ENCODE measurements at regions of chr1 and their contacts with region 1.

Region 1: DNA sequence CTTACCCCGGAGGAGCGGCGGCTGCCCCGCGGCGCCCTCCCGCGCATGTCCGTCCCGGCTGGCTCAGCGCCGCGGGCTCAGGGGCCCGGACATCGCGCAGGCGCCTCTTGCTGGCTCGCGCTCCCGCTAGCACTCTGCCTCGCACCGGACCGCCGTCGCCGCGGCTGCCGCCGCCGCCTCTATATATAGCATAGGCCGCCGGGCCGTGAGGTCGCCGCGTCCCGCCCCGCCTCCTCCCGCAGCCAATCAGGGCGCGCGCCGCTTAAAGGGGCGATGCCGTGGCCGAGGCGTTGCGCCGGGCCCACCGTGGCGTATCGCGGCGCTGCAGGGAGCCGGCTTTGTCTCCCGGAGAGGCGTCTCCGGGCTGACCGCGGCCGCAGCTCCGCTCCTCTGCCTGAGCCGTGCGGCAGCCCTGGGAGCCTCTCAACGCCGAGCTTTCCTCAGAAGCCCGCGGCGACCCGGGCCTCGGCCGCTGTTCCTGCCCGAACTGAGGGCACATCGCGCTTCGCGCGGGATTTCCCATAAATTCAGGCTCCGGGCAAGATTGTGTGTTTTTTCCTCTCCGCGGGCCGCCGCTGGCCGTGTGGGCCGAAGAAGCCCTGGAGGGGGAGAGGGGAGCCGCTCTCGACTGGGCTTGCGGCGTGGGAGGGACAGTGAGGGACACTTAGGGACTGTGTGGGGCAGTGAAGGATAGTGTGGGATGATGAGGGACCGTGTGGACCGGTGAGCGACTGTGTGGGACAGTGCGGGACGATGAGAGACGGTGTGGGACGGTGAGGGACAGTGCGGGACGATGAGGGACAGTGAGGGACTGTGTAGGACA is at the start of gene ERRFI1:
- DNase-seq: peak; percentile 67 to 94 (median 84)
- ATAC-seq: peak; percentile 88
- H3K4me3 ChIP-seq: peak within 1 kb of the TSS; percentile 48
- H3K4me3 Mint-ChIP-seq: peak within 1 kb of the TSS; percentile 92
- H3K27ac ChIP-seq: no peak within 1 kb of the TSS
- H3K27ac Mint-ChIP-seq: peak within 1 kb of the TSS; percentile 48
- H3K4me1 ChIP-seq: peaks cover 13% of the 10 kb centered on the region
- H3K4me1 Mint-ChIP-seq: peaks cover 13% of the 10 kb centered on the region
- H3K27me3 ChIP-seq: peaks cover 3 to 14% of the 10 kb centered on the region in 2 experiments
- H3K27me3 Mint-ChIP-seq: peaks cover 30% of the 10 kb centered on the region
- CTCF ChIP-seq: no peak
- total RNA-seq, gene ERRFI1: 3.6 TPM

Region 2: GRCh38 chr1:7961216-7962015 is 64.9 kb before region 1 on chr1 and contains the start of gene PARK7:
- CTCF ChIA-PET with region 1: no interaction called
- POLR2A ChIA-PET with region 1: no interaction called
- intact Hi-C with region 1: loop called in 1 of 2 experiments (anchors 2 kb)
- DNase-seq: peak; percentile 99 to 100 (median 100)
- ATAC-seq: peak; percentile 95
- H3K4me3 ChIP-seq: peak within 1 kb of the TSS; percentile 84
- H3K4me3 Mint-ChIP-seq: peak within 1 kb of the TSS; percentile 99
- H3K27ac ChIP-seq: peak within 1 kb of the TSS; percentile 88 to 94
- H3K27ac Mint-ChIP-seq: peak within 1 kb of the TSS; percentile 98
- H3K4me1 ChIP-seq: peaks cover 56% of the 10 kb centered on the region
- H3K4me1 Mint-ChIP-seq: peaks cover 78% of the 10 kb centered on the region
- H3K27me3 ChIP-seq: no peaks in the 10 kb centered on the region
- H3K27me3 Mint-ChIP-seq: no peaks in the 10 kb centered on the region
- CTCF ChIP-seq: peak; percentile 57
- total RNA-seq, gene PARK7: 57.7 to 62.4 TPM

Region 3: DNA sequence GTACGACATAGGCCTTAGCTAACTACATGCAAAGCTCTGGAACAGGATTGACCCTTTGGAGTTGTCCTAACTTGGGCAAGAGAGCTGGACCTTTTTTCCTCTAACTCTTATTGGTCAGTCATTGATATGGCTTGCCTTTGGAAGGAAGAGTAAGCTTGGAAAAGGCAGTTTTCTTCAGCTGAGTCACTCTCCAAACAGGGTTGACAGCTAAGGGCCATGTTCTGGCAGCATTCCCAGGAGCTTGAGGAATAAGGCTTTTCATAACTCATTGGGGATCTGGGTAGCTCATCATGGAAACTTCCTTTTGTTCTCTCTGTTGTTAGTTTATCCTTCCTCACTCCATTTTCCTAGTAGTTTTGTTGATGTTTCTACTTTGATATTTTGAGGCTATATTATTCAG is 14.2 kb after region 1 on chr1:
- CTCF ChIA-PET with region 1: no interaction called
- POLR2A ChIA-PET with region 1: no interaction called
- intact Hi-C with region 1: no loop called
- DNase-seq: no peak
- ATAC-seq: no peak
- H3K4me3 ChIP-seq: no peak overlapping the region
- H3K4me3 Mint-ChIP-seq: no peak overlapping the region
- H3K27ac ChIP-seq: no peak overlapping the region
- H3K27ac Mint-ChIP-seq: no peak overlapping the region
- H3K4me1 ChIP-seq: no peaks in the 10 kb centered on the region
- H3K4me1 Mint-ChIP-seq: no peaks in the 10 kb centered on the region
- H3K27me3 ChIP-seq: peaks cover 0 to 2% of the 10 kb centered on the region in 2 experiments
- H3K27me3 Mint-ChIP-seq: no peaks in the 10 kb centered on the region
- CTCF ChIP-seq: no peak

Region 4: GRCh38 chr1:8217011-8217711 is 190.8 kb after region 1 on chr1:
- CTCF ChIA-PET with region 1: no interaction called
- POLR2A ChIA-PET with region 1: no interaction called
- intact Hi-C with region 1: loop called in 1 of 2 experiments (anchors 5 kb)
- DNase-seq: peak in 11 of 14 experiments; percentile 3 to 48 (median 19)
- ATAC-seq: peak; percentile 39
- H3K4me3 ChIP-seq: peak overlapping the region; percentile 51
- H3K4me3 Mint-ChIP-seq: peak overlapping the region; percentile 61
- H3K27ac ChIP-seq: no peak overlapping the region
- H3K27ac Mint-ChIP-seq: no peak overlapping the region
- H3K4me1 ChIP-seq: peaks cover 14% of the 10 kb centered on the region
- H3K4me1 Mint-ChIP-seq: peaks cover 5% of the 10 kb centered on the region
- H3K27me3 ChIP-seq: peaks cover 27 to 32% of the 10 kb centered on the region in 2 experiments
- H3K27me3 Mint-ChIP-seq: peaks cover 70% of the 10 kb centered on the region
- CTCF ChIP-seq: no peak

Region 5: DNA sequence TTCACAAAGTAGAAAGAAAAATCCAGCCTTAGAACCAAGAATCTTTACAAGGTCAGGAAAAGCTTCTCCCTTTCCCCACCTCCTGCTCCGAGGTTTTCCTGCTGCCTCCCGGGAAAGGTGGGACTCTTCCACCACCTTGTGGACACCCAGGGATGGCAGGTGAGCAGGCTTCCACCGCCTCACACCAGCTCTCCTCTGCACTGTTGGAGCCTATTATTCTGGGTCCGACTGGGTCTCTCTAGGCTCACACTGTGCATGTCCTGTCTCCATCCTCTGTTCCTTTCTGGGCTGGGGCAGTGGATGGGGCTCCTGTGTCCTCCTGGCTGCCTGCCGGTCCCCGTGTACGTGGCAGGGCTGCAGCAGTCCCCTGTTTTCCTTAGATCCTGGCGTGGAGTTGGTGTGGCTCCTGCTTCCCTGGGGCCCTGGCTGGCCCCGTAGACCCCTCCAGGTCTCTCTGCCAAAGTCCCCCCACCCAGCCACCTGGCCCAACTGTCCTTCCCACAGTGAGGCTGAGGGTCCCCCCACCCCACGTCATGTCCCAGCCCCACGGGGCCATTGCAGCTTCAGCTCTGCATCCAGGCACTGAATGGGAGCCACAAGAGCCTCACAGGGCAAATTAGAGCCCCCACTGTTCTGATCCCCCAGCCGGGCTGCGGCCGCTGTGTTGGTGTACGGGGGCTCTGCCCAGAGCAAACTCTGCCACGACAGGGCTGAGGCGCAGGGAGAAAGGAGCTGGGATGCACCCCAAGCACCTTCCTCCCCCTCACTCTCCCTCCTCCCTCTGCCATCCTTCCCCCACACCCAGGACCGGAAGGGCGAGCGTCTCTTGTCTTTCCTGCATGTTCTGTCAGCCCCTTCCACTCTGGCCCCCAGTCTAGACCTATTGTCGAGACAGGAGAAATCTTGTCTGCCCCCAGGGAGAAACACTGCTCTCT is 288.2 kb after region 1 on chr1:
- CTCF ChIA-PET with region 1: interaction called, 14 read pairs
- POLR2A ChIA-PET with region 1: interaction called, 3 read pairs
- intact Hi-C with region 1: loop called (anchors 1 kb)
- DNase-seq: peak; percentile 29 to 75 (median 46)
- ATAC-seq: peak; percentile 30
- H3K4me3 ChIP-seq: no peak overlapping the region
- H3K4me3 Mint-ChIP-seq: no peak overlapping the region
- H3K27ac ChIP-seq: no peak overlapping the region
- H3K27ac Mint-ChIP-seq: no peak overlapping the region
- H3K4me1 ChIP-seq: peaks cover 29% of the 10 kb centered on the region
- H3K4me1 Mint-ChIP-seq: peaks cover 21% of the 10 kb centered on the region
- H3K27me3 ChIP-seq: peaks cover 17 to 21% of the 10 kb centered on the region in 2 experiments
- H3K27me3 Mint-ChIP-seq: peaks cover 34% of the 10 kb centered on the region
- CTCF ChIP-seq: peak; percentile 74

Region 6: DNA sequence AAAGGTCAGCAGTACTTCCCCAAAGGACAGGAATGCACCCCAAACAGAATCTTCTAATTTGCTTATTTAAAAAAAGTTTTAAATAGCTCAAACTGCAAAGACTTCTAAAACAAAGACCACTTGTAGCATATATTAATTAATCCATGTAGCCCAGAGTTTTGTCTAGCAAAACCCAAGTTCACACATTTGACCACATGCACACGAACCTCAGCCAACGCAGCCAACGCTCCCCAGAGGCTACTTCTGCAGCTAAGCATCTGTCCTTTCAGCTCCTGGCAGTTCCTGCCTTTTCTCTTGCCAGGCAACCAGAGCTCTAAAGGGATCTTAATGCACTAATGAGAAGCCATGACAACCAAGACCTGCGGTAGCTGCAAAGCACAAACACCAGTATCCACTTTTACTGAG is 701.4 kb after region 1 on chr1:
- CTCF ChIA-PET with region 1: no interaction called
- POLR2A ChIA-PET with region 1: no interaction called
- intact Hi-C with region 1: loop called in 1 of 2 experiments (anchors 5 kb)
- DNase-seq: no peak
- ATAC-seq: no peak
- H3K4me3 ChIP-seq: no peak overlapping the region
- H3K4me3 Mint-ChIP-seq: no peak overlapping the region
- H3K27ac ChIP-seq: no peak overlapping the region
- H3K27ac Mint-ChIP-seq: no peak overlapping the region
- H3K4me1 ChIP-seq: no peaks in the 10 kb centered on the region
- H3K4me1 Mint-ChIP-seq: peaks cover 19% of the 10 kb centered on the region
- H3K27me3 ChIP-seq: no peaks in the 10 kb centered on the region
- H3K27me3 Mint-ChIP-seq: no peaks in the 10 kb centered on the region
- CTCF ChIP-seq: no peak

Measured in CD4-positive, alpha-beta T cell (primary cell).